ENCODE measurements at regions of chr13 and their contacts with region 1.

Region 1: DNA sequence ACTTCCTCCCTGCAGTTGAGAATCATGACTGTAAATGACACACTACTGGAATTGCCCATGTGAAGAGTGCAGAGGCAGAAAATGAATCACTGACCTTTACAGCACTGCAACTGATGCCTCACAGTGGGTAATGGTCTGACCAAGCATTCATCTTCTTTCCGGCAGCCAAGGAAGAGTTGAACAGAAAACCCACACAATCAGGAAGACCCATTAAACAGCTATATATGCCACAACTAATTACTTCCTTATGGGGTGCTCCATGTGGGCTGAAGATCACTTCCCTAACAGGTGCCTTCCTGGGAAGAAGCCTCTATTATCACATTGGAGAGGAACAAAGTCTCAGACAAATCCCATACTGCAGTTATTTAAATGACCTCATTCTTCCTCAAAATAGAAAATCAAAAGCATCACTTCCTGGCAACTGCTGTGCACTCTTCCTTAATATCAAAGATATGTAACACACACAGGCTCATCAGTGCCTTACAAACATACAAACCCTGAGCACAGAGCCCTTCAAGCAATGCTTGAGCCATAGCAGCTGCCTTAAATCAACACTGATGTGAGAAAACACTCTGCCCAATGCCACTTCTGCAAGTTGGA is 45.8 kb downstream of the RUBCNL start:
- DNase-seq: no peak
- ATAC-seq: peak; percentile 83
- H3K4me3 Mint-ChIP-seq: peak overlapping the region; percentile 63
- H3K27ac Mint-ChIP-seq: peak overlapping the region; percentile 91
- H3K4me1 Mint-ChIP-seq: peaks cover 66% of the 10 kb centered on the region
- H3K27me3 Mint-ChIP-seq: no peaks in the 10 kb centered on the region
- CTCF ChIP-seq: no peak

Region 2: GRCh38 chr13:46354156-46355091 is 13.2 kb after region 1 on chr13:
- CTCF ChIA-PET with region 1: no interaction called
- POLR2A ChIA-PET with region 1: interaction called, 6 read pairs
- intact Hi-C with region 1: loop called (anchors 2 kb)
- DNase-seq: no peak
- ATAC-seq: peak; percentile 79
- H3K4me3 Mint-ChIP-seq: no peak overlapping the region
- H3K27ac Mint-ChIP-seq: peak overlapping the region; percentile 83
- H3K4me1 Mint-ChIP-seq: peaks cover 12% of the 10 kb centered on the region
- H3K27me3 Mint-ChIP-seq: no peaks in the 10 kb centered on the region
- CTCF ChIP-seq: no peak

Region 3: DNA sequence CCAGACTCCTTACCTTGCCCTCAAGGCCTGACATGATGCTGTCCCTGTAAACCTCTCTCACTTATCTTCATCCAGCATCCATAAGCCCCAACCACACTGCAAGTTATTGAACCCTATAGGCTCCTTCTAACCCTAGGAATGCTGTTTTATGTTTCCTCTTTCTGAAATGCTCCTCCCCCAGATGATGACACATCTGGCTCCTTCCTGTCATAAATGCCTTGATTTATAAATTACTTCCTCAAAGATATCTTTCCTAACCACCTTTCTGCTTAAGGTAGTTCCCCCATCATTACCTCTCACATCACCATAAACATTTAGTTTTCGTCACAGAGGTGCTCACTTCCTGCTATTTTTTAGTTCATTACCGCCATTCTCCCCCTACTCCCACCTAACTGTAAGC is 33.5 kb after region 1 on chr13:
- CTCF ChIA-PET with region 1: no interaction called
- POLR2A ChIA-PET with region 1: interaction called, 15 read pairs
- intact Hi-C with region 1: loop called (anchors 1 kb)
- DNase-seq: no peak
- ATAC-seq: peak; percentile 61
- H3K4me3 Mint-ChIP-seq: peak overlapping the region; percentile 83
- H3K27ac Mint-ChIP-seq: peak overlapping the region; percentile 95
- H3K4me1 Mint-ChIP-seq: peaks cover 97% of the 10 kb centered on the region
- H3K27me3 Mint-ChIP-seq: no peaks in the 10 kb centered on the region
- CTCF ChIP-seq: no peak

Region 4: GRCh38 chr13:46571189-46571908 is 230.1 kb after region 1 on chr13:
- CTCF ChIA-PET with region 1: no interaction called
- POLR2A ChIA-PET with region 1: no interaction called
- intact Hi-C with region 1: no loop called
- DNase-seq: no peak
- ATAC-seq: no peak
- H3K4me3 Mint-ChIP-seq: no peak overlapping the region
- H3K27ac Mint-ChIP-seq: peak overlapping the region; percentile 71
- H3K4me1 Mint-ChIP-seq: peaks cover 91% of the 10 kb centered on the region
- H3K27me3 Mint-ChIP-seq: no peaks in the 10 kb centered on the region
- CTCF ChIP-seq: no peak

Region 5: DNA sequence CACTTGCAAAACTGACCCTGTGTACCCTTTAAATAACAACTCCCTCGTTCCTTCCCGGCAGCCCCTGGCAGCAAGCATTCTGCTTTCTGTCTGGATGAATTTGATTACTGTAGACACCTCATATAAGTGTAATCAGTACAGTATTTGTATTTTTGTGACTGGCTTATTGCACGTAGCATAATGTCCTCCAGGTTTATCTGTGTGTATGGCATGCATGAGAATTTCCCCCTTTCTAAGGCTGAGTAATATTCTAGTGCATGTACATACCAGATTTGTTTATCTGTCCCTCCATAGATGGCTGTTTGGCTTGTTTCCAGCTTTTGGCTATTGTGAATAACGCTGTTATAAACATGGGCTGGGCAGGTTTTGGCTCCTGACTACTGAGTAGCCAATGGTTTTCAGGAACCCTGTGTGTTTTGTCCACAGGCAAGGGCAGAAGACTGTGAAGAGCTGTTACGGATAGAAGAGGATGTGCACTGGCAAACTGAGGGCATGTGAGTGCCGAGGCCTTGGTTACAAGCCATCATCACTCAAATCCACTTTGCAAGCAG is 357.8 kb after region 1 on chr13:
- CTCF ChIA-PET with region 1: no interaction called
- POLR2A ChIA-PET with region 1: no interaction called
- intact Hi-C with region 1: no loop called
- DNase-seq: no peak
- ATAC-seq: no peak
- H3K4me3 Mint-ChIP-seq: no peak overlapping the region
- H3K27ac Mint-ChIP-seq: no peak overlapping the region
- H3K4me1 Mint-ChIP-seq: no peaks in the 10 kb centered on the region
- H3K27me3 Mint-ChIP-seq: no peaks in the 10 kb centered on the region
- CTCF ChIP-seq: no peak

Region 6: DNA sequence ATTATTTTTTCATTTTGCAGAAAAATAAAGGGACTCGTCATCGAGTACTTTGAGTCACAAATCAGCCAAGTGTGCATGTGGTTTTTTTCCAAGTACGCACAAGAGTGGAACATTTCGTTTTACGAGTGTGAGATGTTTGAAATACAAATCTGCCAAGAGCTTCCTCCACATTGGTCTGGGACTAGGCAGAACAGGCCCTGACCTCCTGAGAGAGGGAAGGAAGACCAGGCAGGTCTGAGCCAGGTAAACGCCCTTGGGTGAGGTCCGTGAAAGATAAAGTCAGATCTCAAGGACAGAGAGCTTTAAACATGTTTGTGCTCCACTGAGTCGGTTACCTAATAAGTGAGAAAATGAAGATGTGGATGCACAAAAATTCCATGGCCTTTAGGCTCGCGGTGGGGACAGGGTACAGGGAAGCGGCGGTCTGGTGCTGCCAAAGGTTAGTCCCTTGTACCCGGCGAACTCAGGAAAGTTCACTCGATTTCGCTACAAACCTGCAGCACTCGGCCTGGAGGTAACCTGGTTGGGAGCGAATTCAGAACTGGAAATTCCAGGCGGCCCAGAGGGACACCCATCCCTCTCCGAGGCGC is 1891.3 kb after region 1 on chr13:
- CTCF ChIA-PET with region 1: no interaction called
- POLR2A ChIA-PET with region 1: no interaction called
- intact Hi-C with region 1: no loop called
- DNase-seq: no peak
- ATAC-seq: peak; percentile 14
- H3K4me3 Mint-ChIP-seq: peak overlapping the region; percentile 93
- H3K27ac Mint-ChIP-seq: peak overlapping the region; percentile 87
- H3K4me1 Mint-ChIP-seq: peaks cover 47% of the 10 kb centered on the region
- H3K27me3 Mint-ChIP-seq: peaks cover 7% of the 10 kb centered on the region
- CTCF ChIP-seq: no peak

Measured in activated B cell treated with CpG ODN at 0.5 μM for 24 hours (primary cell).